Spleen (tissue), 13 donors: ENCODE measurements at regions of chr11 and their contacts with region 1.

Region 1: GRCh38 chr11:6377902-6378639 is 12.2 kb upstream of the SMPD1 start:
- DNase-seq: no peak
- H3K4me3 ChIP-seq: peak overlapping the region in 1 of 8 donors; percentile 29
- H3K27ac ChIP-seq: peak overlapping the region in 5 of 8 donors; percentile 1 to 77 (median 42)
- H3K4me1 ChIP-seq: peaks cover 0 to 27% (median 18%) of the 10 kb centered on the region in 6 donors
- H3K27me3 ChIP-seq: no peaks in the 10 kb centered on the region
- CTCF ChIP-seq: no peak
- POLR2A ChIP-seq: no peak

Region 2: GRCh38 chr11:6022956-6023355 is 355.1 kb before region 1 on chr11:
- intact Hi-C with region 1: no loop called
- DNase-seq: no peak
- H3K4me3 ChIP-seq: no peak overlapping the region
- H3K27ac ChIP-seq: no peak overlapping the region
- H3K4me1 ChIP-seq: no peaks in the 10 kb centered on the region
- H3K27me3 ChIP-seq: peaks cover 0 to 16% (median 0%) of the 10 kb centered on the region in 7 donors
- CTCF ChIP-seq: peak; percentile 30 to 68 (median 39)
- POLR2A ChIP-seq: no peak

Region 3: GRCh38 chr11:6062691-6063358 is 315.2 kb before region 1 on chr11:
- intact Hi-C with region 1: no loop called
- DNase-seq: no peak
- H3K4me3 ChIP-seq: no peak overlapping the region
- H3K27ac ChIP-seq: no peak overlapping the region
- H3K4me1 ChIP-seq: no peaks in the 10 kb centered on the region
- H3K27me3 ChIP-seq: no peaks in the 10 kb centered on the region
- CTCF ChIP-seq: no peak
- POLR2A ChIP-seq: no peak

Region 4: DNA sequence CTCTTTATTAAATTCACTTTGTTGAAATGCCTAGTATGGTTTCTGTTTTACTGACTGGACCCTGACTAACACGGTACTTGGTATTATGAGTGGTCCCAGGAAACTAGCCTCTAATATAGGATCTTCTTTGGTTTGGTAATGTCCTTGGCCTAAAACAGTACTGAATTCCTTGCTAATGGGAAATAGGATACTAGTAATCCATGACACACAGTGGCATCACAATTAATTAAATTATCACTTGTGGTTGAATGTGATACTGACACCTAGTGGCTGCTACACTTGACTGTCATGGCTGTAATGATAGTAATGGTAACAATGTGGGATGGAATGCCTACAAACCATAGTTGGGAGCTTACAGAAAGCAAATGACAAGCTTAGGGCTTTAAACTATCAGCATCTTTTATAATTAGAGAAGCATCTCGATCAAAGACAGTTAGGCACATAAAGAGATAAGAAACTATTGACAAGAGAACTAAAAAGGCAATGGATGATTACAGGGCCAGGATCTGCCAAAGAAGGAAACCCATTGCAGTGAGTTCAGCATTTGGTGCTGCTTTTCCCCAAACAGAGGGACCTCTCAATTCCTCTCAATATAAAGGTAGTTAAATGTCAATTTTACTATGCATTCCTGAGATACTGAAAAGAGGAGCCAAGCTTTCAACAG is 127.6 kb after region 1 on chr11:
- intact Hi-C with region 1: loop called (anchors 5 kb)
- DNase-seq: no peak
- H3K4me3 ChIP-seq: no peak overlapping the region
- H3K27ac ChIP-seq: no peak overlapping the region
- H3K4me1 ChIP-seq: no peaks in the 10 kb centered on the region
- H3K27me3 ChIP-seq: no peaks in the 10 kb centered on the region
- CTCF ChIP-seq: peak; percentile 40 to 78 (median 64)
- POLR2A ChIP-seq: no peak